PC-3 (cell line): ENCODE measurements at regions of chr13 and their contacts with region 1.

Region 1: DNA sequence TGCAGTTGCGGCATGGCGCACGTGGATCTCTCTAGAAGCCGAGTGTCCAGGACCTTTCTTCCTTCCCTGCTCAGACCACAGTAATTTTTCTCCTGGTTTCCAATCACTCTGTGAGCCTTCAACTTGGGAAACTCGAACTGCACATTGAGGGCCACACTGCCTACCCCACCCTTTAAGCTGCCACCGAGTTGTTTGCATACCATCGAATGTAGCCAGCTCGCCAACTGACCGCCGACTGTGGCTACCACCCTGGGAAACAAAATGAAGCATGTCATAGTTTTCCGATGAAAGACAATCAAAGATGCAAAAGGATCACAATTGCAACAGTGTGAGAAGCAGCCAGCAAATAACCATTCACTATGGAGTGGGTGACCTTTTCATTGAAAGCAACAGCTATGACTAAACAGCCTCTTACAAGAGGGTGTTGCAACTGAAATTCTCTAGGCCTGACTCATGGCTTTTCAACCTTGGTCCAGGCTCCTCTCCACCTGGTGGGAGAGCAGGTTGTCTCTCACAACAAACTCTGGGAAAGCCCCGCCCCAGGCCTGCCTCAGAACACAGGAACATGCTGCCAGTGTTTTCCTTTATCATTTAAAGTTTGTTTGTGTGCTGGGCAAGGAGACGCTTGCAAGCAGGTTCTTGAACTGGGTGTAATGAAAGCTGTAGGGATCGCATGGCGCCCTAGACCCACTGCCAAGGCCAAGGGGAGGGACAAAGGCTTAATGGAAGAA is 141.7 kb upstream of the SERP2 start:
- DNase-seq: peak; percentile 97
- ATAC-seq: peak; percentile 84
- H3K4me3 ChIP-seq: no peak overlapping the region
- H3K27ac ChIP-seq: peak overlapping the region; percentile 100
- H3K4me1 ChIP-seq: peaks cover 42% of the 10 kb centered on the region
- H3K27me3 ChIP-seq: no peaks in the 10 kb centered on the region
- CTCF ChIP-seq: no peak

Region 2: GRCh38 chr13:43905435-43906031 is 326.4 kb before region 1 on chr13:
- CTCF ChIA-PET with region 1: no interaction called
- POLR2A ChIA-PET with region 1: no interaction called
- intact Hi-C with region 1: loop called (anchors 5 kb)
- DNase-seq: peak; percentile 80
- ATAC-seq: peak; percentile 59
- H3K4me3 ChIP-seq: no peak overlapping the region
- H3K27ac ChIP-seq: no peak overlapping the region
- H3K4me1 ChIP-seq: peaks cover 20% of the 10 kb centered on the region
- H3K27me3 ChIP-seq: no peaks in the 10 kb centered on the region
- CTCF ChIP-seq: peak; percentile 76

Region 3: GRCh38 chr13:44068737-44069136 is 163.2 kb before region 1 on chr13:
- CTCF ChIA-PET with region 1: no interaction called
- POLR2A ChIA-PET with region 1: no interaction called
- intact Hi-C with region 1: loop called (anchors 5 kb)
- DNase-seq: peak; percentile 82
- ATAC-seq: peak; percentile 91
- H3K4me3 ChIP-seq: peak overlapping the region; percentile 29; the same call in 1 of the 2 replicates
- H3K27ac ChIP-seq: peak overlapping the region; percentile 87
- H3K4me1 ChIP-seq: peaks cover 18% of the 10 kb centered on the region
- H3K27me3 ChIP-seq: no peaks in the 10 kb centered on the region
- CTCF ChIP-seq: no peak

Region 4: GRCh38 chr13:44116562-44117332 is 115.2 kb before region 1 on chr13:
- CTCF ChIA-PET with region 1: no interaction called
- POLR2A ChIA-PET with region 1: no interaction called
- intact Hi-C with region 1: no loop called
- DNase-seq: no peak
- ATAC-seq: no peak
- H3K4me3 ChIP-seq: no peak overlapping the region
- H3K27ac ChIP-seq: no peak overlapping the region
- H3K4me1 ChIP-seq: no peaks in the 10 kb centered on the region
- H3K27me3 ChIP-seq: no peaks in the 10 kb centered on the region
- CTCF ChIP-seq: no peak

Region 5: DNA sequence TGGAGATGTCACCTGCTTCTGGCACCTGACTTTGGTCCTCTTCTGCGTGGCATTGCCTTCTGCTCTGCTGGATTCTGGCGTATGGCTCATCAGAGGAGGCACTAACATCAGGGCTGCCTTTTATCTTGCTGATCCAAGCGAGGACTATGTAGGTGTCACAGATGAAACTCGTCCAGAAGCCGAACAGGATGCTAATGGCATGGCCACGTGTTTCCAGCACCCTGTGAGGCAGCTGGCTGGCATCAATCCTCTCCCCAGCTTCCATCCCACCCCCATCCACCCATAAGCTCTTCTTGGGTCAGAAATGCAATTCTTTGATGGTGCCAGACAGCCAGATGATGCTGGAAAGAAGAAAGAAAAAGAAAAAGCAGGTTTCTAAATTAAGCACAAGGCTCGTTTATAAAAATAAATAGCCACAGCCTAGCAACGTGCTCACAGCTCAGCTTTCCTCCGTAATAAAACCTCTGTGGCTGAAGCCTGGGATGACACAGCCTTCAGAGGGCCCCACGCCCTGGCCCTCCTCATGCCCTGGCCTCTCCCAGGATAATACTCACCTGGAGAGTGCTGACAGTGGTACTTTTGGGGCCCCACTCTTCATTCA is 71.3 kb before region 1 on chr13:
- CTCF ChIA-PET with region 1: no interaction called
- POLR2A ChIA-PET with region 1: interaction called, 3 read pairs
- intact Hi-C with region 1: loop called (anchors 1 kb)
- DNase-seq: peak; percentile 63
- ATAC-seq: peak; percentile 64
- H3K4me3 ChIP-seq: no peak overlapping the region
- H3K27ac ChIP-seq: peak overlapping the region; percentile 100
- H3K4me1 ChIP-seq: peaks cover 34% of the 10 kb centered on the region
- H3K27me3 ChIP-seq: no peaks in the 10 kb centered on the region
- CTCF ChIP-seq: no peak

Region 6: DNA sequence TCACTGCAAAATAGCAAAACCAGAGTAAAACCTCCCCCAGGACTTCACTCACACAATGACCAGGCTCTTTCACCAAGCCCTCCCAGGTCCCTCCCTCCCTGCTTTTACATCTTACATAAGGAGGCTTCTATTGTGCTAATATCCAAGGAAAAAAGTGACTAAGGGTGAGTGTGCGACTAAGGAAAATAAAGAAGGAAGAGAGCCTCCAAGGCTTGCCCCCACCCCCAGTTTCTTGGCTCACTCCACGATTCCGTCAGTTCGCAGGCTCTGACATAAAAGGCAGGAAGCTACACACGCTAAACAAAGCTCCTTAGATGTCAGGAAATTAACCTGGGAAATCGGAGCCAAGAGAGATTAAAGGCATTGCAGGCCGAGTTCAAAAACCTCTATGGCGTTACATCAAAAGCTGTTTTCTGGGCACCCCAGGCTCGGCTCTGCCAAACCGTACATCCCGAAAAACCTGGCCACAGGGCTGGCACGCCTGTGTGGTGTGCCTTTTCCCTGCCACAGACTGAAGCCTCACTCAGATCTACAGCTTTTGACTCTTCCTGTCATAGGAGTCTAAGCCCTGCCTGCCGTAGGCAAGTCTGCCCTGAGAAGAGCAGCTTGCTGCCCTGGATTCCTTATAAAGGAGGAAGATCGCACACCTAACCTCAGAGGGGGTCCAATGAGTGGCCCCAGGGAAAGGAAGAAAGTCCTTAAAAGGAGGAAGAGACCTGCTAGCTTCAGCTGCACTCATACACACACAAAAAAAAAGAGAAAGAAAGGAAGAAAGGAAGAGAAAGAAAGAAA is 74.6 kb after region 1 on chr13:
- CTCF ChIA-PET with region 1: no interaction called
- POLR2A ChIA-PET with region 1: interaction called, 3 read pairs
- intact Hi-C with region 1: loop called (anchors 1 kb)
- DNase-seq: peak; percentile 95
- ATAC-seq: peak; percentile 73
- H3K4me3 ChIP-seq: peak overlapping the region; percentile 47
- H3K27ac ChIP-seq: peak overlapping the region; percentile 100
- H3K4me1 ChIP-seq: peaks cover 73% of the 10 kb centered on the region
- H3K27me3 ChIP-seq: no peaks in the 10 kb centered on the region
- CTCF ChIP-seq: no peak

Region 7: DNA sequence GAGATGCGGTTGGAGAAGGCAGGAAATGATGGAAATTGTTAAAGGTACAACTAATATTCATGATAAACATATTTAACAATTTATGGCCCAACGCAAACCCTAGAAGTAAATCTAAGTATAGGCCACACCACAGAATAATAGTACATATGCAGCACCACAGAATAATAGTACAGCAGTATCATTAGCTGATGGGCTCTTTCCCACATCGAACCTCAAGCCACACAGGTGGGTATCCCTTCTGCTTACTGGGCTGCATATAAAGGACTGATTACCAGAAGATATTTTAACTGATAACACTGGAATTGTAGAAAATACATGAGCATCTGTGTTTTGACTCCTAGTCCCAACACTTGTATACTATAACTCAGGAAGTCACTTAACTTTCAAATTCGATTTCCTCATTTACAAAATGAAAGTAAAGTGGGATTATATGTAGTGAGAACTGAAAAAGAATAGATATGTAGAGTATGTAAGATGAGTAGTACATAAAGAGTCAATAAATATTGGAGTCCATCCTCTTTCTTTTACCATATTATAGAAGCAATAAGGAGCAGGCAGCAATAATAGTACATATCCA is 252.7 kb after region 1 on chr13:
- CTCF ChIA-PET with region 1: interaction called, 12 read pairs
- POLR2A ChIA-PET with region 1: no interaction called
- intact Hi-C with region 1: no loop called
- DNase-seq: no peak
- ATAC-seq: no peak
- H3K4me3 ChIP-seq: no peak overlapping the region
- H3K27ac ChIP-seq: no peak overlapping the region
- H3K4me1 ChIP-seq: peaks cover 6% of the 10 kb centered on the region; the same call in 1 of the 2 replicates
- H3K27me3 ChIP-seq: no peaks in the 10 kb centered on the region
- CTCF ChIP-seq: no peak